Naive thymus-derived CD4-positive, alpha-beta T cell (primary cell): ENCODE measurements at regions of chr11 and their contacts with region 1.

Region 1: GRCh38 chr11:33742249-33742851 is 6.1 kb upstream of the CD59 start:
- DNase-seq: peak in 4 of 9 donors; percentile 26 to 37 (median 28)
- ATAC-seq: peak; percentile 77
- H3K4me3 ChIP-seq: no peak overlapping the region
- H3K4me3 Mint-ChIP-seq: no peak overlapping the region
- H3K27ac ChIP-seq: no peak overlapping the region
- H3K27ac Mint-ChIP-seq: peak overlapping the region in 2 of 9 donors; percentile 20 to 67
- H3K4me1 ChIP-seq: no peaks in the 10 kb centered on the region
- H3K4me1 Mint-ChIP-seq: peaks cover 0 to 4% (median 0%) of the 10 kb centered on the region in 7 donors
- H3K27me3 ChIP-seq: no peaks in the 10 kb centered on the region
- H3K27me3 Mint-ChIP-seq: peaks cover 0 to 6% (median 0%) of the 10 kb centered on the region in 5 donors

Region 2: DNA sequence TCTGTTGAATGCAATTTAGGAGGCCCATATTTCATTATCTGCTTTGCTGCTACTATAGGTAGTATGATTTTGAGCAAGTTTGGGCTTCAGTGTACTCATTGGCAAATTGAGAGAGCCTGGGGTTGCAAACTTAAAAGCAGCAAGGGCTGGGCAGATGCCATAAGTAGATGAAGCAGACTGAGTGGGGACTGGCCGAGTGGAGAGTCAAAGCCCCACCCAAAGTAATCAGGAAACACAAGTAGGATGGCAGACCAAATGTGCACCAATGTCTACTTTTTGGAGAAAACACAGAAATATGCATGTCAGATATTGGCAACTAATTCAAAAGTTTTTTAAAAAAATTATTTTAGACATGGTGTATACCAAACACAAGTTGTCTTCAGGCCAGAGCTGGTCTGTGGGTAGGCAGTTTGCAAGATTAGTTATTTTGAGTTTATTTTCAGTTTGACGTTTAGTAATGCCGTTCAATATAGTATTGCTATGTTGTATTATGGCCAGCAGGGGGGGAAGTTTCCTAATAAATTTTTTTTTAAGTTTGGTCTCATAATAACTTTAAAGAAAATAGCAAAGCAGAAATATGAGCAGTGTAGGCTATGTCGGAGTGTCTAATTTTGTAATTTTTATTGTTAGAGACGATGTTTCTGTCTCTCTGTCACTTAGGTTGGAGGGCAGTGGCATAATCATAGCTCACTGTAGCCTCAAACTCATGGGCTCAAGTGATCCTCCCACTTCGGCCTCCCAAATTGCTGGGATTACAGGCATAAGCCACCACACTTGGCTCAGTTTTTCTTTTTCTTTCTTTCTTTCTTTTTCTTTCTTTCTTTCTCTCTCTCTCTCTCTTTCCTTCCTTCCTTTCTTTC is 380.1 kb before region 1 on chr11:
- CTCF ChIA-PET with region 1: interaction called, 4 read pairs
- POLR2A ChIA-PET with region 1: no interaction called
- intact Hi-C with region 1: loop called in 1 of 2 experiments (anchors 1 kb)
- DNase-seq: peak in 7 of 9 donors; percentile 20 to 45 (median 35)
- ATAC-seq: peak; percentile 69
- H3K4me3 ChIP-seq: no peak overlapping the region
- H3K4me3 Mint-ChIP-seq: peak overlapping the region in 1 of 10 donors; percentile 53
- H3K27ac ChIP-seq: no peak overlapping the region
- H3K27ac Mint-ChIP-seq: no peak overlapping the region
- H3K4me1 ChIP-seq: no peaks in the 10 kb centered on the region
- H3K4me1 Mint-ChIP-seq: peaks cover 0 to 6% (median 2%) of the 10 kb centered on the region in 7 donors
- H3K27me3 ChIP-seq: no peaks in the 10 kb centered on the region
- H3K27me3 Mint-ChIP-seq: peaks cover 5 to 29% (median 14%) of the 10 kb centered on the region in 5 donors

Region 3: DNA sequence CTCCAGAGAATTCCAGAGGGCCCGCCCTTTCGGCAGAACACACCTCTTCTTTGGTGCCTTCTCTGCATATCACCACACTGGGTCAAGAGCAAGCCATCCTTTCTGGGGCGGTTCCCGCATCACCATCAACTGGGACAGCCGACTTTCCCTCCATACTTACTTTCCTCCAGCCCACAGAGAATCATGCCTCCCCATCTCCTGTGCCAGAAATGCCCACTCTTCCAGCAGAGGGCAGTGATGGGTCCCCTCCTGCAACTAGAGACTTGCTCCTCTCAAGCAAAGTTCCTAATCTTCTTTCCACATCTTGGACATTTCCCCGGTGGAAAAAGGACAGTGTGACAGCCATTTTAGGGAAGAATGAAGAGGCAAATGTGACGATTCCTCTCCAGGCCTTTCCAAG is 199.4 kb before region 1 on chr11:
- CTCF ChIA-PET with region 1: interaction called, 14 read pairs
- POLR2A ChIA-PET with region 1: no interaction called
- intact Hi-C with region 1: loop called in 1 of 2 experiments (anchors 1 kb)
- DNase-seq: peak in 6 of 9 donors; percentile 11 to 31 (median 16)
- ATAC-seq: no peak
- H3K4me3 ChIP-seq: no peak overlapping the region
- H3K4me3 Mint-ChIP-seq: no peak overlapping the region
- H3K27ac ChIP-seq: no peak overlapping the region
- H3K27ac Mint-ChIP-seq: no peak overlapping the region
- H3K4me1 ChIP-seq: no peaks in the 10 kb centered on the region
- H3K4me1 Mint-ChIP-seq: peaks cover 0 to 3% (median 0%) of the 10 kb centered on the region in 7 donors
- H3K27me3 ChIP-seq: no peaks in the 10 kb centered on the region
- H3K27me3 Mint-ChIP-seq: peaks cover 21 to 33% (median 25%) of the 10 kb centered on the region in 5 donors

Region 4: GRCh38 chr11:33716236-33716635 is 26.1 kb before region 1 on chr11:
- CTCF ChIA-PET with region 1: interaction called, 30 read pairs
- POLR2A ChIA-PET with region 1: interaction called, 4 read pairs
- intact Hi-C with region 1: loop called (anchors 1 kb)
- DNase-seq: peak in 2 of 9 donors; percentile 10 to 23
- ATAC-seq: no peak
- H3K4me3 ChIP-seq: no peak overlapping the region
- H3K4me3 Mint-ChIP-seq: no peak overlapping the region
- H3K27ac ChIP-seq: no peak overlapping the region
- H3K27ac Mint-ChIP-seq: no peak overlapping the region
- H3K4me1 ChIP-seq: no peaks in the 10 kb centered on the region
- H3K4me1 Mint-ChIP-seq: peaks cover 0 to 7% (median 0%) of the 10 kb centered on the region in 7 donors
- H3K27me3 ChIP-seq: no peaks in the 10 kb centered on the region
- H3K27me3 Mint-ChIP-seq: no peaks in the 10 kb centered on the region